PC-3 (cell line): ENCODE measurements at regions of chr14 and their contacts with region 1.

Region 1: GRCh38 chr14:50599700-50600444 is 39.9 kb downstream of the ATL1 start:
- DNase-seq: peak; percentile 86
- ATAC-seq: peak; percentile 66
- H3K4me3 ChIP-seq: peak overlapping the region; percentile 30; the same call in 1 of the 2 replicates
- H3K27ac ChIP-seq: peak overlapping the region; percentile 44
- H3K4me1 ChIP-seq: peaks cover 32% of the 10 kb centered on the region
- H3K27me3 ChIP-seq: no peaks in the 10 kb centered on the region
- CTCF ChIP-seq: peak; percentile 92

Region 2: DNA sequence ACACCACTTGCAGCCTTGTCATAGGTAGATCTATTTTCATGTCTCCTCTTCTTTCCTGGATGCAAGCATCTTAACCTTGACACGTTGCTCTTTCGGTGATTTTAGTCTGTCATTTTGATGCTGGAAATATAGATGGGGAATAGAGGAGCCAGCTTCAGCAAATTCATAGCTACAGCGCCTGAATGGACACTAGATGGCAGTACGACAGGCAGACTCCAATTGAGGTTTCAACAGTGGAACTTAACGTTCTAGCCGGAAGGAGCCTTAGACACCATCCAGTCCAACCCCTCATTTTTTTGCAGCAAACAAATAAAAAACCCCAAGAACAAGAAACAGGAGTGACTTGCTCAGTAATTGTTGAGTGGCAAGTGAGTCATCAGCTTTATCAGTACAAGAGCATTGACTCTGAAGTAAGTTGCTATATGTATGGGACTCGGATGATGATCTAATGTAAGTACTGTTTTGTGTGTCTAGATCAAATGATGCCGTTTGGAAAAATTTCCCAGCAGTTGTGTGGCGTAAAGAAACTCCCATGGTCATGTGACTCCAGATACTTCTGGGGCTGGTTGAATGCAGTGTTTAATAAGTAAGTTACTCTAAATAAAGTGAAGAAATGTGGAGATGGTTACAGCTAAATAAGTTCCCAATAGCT is 278.7 kb before region 1 on chr14:
- CTCF ChIA-PET with region 1: no interaction called
- POLR2A ChIA-PET with region 1: no interaction called
- intact Hi-C with region 1: loop called (anchors 1 kb)
- DNase-seq: peak; percentile 97
- ATAC-seq: peak; percentile 96
- H3K4me3 ChIP-seq: peak overlapping the region; percentile 25; the same call in 1 of the 2 replicates
- H3K27ac ChIP-seq: peak overlapping the region; percentile 87
- H3K4me1 ChIP-seq: peaks cover 22% of the 10 kb centered on the region
- H3K27me3 ChIP-seq: no peaks in the 10 kb centered on the region
- CTCF ChIP-seq: peak; percentile 98

Region 3: DNA sequence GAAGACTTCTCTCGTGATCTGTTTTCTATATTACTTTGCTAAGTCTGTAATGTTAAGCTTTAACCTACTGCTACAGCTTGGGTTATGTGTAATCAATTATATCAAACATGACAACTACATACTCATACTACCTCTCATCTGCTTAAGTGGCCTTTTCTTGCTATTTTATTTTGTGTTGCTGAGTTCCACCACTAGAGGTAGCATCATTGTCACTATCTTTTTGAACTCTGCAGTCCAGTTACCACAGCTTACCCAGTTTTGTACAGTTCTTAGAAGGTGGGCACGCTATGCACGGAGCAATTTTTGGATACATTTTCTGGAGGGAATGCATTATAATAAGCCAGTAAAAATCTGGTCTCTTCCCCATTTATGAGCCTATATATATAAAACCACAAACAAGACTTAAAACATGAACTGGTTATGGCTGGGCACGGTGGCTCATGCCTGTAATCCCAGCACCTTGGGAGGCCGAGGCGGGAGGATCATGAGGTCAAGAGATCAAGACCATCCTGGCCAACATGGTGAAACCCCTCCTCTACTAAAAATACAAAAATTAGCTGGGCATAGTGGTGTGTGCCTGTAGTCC is 19.8 kb after region 1 on chr14:
- CTCF ChIA-PET with region 1: interaction called, 6 read pairs
- POLR2A ChIA-PET with region 1: no interaction called
- intact Hi-C with region 1: loop called (anchors 1 kb)
- DNase-seq: peak; percentile 72
- ATAC-seq: peak; percentile 93
- H3K4me3 ChIP-seq: no peak overlapping the region
- H3K27ac ChIP-seq: no peak overlapping the region
- H3K4me1 ChIP-seq: peaks cover 8% of the 10 kb centered on the region
- H3K27me3 ChIP-seq: no peaks in the 10 kb centered on the region
- CTCF ChIP-seq: peak; percentile 89

Region 4: GRCh38 chr14:50714450-50715073 is 114.7 kb after region 1 on chr14:
- CTCF ChIA-PET with region 1: interaction called, 11 read pairs
- POLR2A ChIA-PET with region 1: no interaction called
- intact Hi-C with region 1: loop called (anchors 5 kb)
- DNase-seq: peak; percentile 67
- ATAC-seq: peak; percentile 93
- H3K4me3 ChIP-seq: no peak overlapping the region
- H3K27ac ChIP-seq: no peak overlapping the region
- H3K4me1 ChIP-seq: no peaks in the 10 kb centered on the region
- H3K27me3 ChIP-seq: no peaks in the 10 kb centered on the region
- CTCF ChIP-seq: peak; percentile 79

Region 5: DNA sequence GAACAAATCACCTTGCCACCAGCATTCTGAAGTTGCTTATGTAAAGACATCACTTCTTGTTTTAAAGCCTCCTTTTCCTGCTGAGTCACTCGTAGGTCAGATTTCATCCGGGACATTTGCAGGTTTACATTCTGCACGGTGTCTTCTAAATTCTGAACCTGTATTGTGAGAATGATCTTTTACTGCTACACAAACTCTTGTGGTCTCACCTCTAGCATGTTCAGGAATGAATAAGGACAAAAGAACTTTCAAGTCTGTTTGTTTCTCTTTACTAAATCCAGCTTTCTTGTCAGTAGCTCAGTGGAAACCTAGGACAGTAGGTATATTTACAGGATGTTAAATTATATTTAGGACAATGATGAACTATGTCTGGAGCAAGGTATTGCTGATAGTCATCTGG is 141.7 kb after region 1 on chr14:
- CTCF ChIA-PET with region 1: interaction called, 3 read pairs
- POLR2A ChIA-PET with region 1: interaction called, 5 read pairs
- intact Hi-C with region 1: loop called (anchors 1 kb)
- DNase-seq: peak; percentile 95
- ATAC-seq: peak; percentile 93
- H3K4me3 ChIP-seq: peak overlapping the region; percentile 6; the same call in 1 of the 2 replicates
- H3K27ac ChIP-seq: peak overlapping the region; percentile 83
- H3K4me1 ChIP-seq: peaks cover 18% of the 10 kb centered on the region
- H3K27me3 ChIP-seq: no peaks in the 10 kb centered on the region
- CTCF ChIP-seq: no peak